Stomach (tissue), 19 donors: ENCODE measurements at regions of chr19 and their contacts with region 1.

Region 1: GRCh38 chr19:16185123-16185767 is at the start of gene FAM32A:
- DNase-seq: peak; percentile 100
- H3K4me3 ChIP-seq: peak within 1 kb of the TSS; percentile 74 to 99 (median 92)
- H3K27ac ChIP-seq: peak within 1 kb of the TSS; percentile 76 to 91 (median 87)
- H3K4me1 ChIP-seq: peaks cover 12 to 62% (median 44%) of the 10 kb centered on the region in 4 donors
- H3K27me3 ChIP-seq: no peaks in the 10 kb centered on the region
- CTCF ChIP-seq: peak in 4 of 7 experiments; percentile 20 to 47 (median 30)
- EP300 ChIP-seq: no peak
- POLR2A ChIP-seq: peak in 1 of 4 donors; percentile 55
- total RNA-seq, gene FAM32A: 8.2 to 175 (median 61.0) TPM

Region 2: GRCh38 chr19:15629003-15629880 is 556.0 kb before region 1 on chr19:
- intact Hi-C with region 1: loop called (anchors 10 kb)
- DNase-seq: peak; percentile 89 to 90
- H3K4me3 ChIP-seq: no peak overlapping the region
- H3K27ac ChIP-seq: no peak overlapping the region
- H3K4me1 ChIP-seq: peaks cover 0 to 8% (median 4%) of the 10 kb centered on the region in 4 donors
- H3K27me3 ChIP-seq: peaks cover 0 to 34% (median 8%) of the 10 kb centered on the region in 3 donors
- CTCF ChIP-seq: peak in 6 of 7 experiments; percentile 87 to 97 (median 94)
- EP300 ChIP-seq: no peak
- POLR2A ChIP-seq: no peak

Region 3: GRCh38 chr19:16041299-16041990 is 143.8 kb before region 1 on chr19:
- intact Hi-C with region 1: loop called (anchors 5 kb)
- DNase-seq: peak; percentile 87 to 90
- H3K4me3 ChIP-seq: peak overlapping the region in 1 of 4 donors; percentile 13
- H3K27ac ChIP-seq: peak overlapping the region in 3 of 5 donors; percentile 25 to 54 (median 50)
- H3K4me1 ChIP-seq: peaks cover 8 to 14% (median 9%) of the 10 kb centered on the region in 4 donors
- H3K27me3 ChIP-seq: no peaks in the 10 kb centered on the region
- CTCF ChIP-seq: peak in 6 of 7 experiments; percentile 71 to 99 (median 96)
- EP300 ChIP-seq: no peak
- POLR2A ChIP-seq: no peak

Region 4: GRCh38 chr19:16216744-16217670 is 31.8 kb after region 1 on chr19:
- intact Hi-C with region 1: no loop called
- DNase-seq: peak in 1 of 2 donors; percentile 44
- H3K4me3 ChIP-seq: no peak overlapping the region
- H3K27ac ChIP-seq: no peak overlapping the region
- H3K4me1 ChIP-seq: peaks cover 0 to 13% (median 6%) of the 10 kb centered on the region in 4 donors
- H3K27me3 ChIP-seq: no peaks in the 10 kb centered on the region
- CTCF ChIP-seq: no peak
- EP300 ChIP-seq: no peak
- POLR2A ChIP-seq: no peak